ENCODE measurements at regions of chr1 and their contacts with region 1.

Region 1: GRCh38 chr1:23184212-23184934 is 15.7 kb upstream of the LUZP1 start:
- DNase-seq: peak; percentile 76
- ATAC-seq: no peak
- H3K4me3 ChIP-seq: peak overlapping the region in 3 of 5 experiments; percentile 13 to 59 (median 39)
- H3K4me3 Mint-ChIP-seq: peak overlapping the region; percentile 72
- H3K27ac ChIP-seq: no peak overlapping the region
- H3K27ac Mint-ChIP-seq: no peak overlapping the region
- H3K4me1 ChIP-seq: peaks cover 3 to 8% of the 10 kb centered on the region in 2 donors
- H3K4me1 Mint-ChIP-seq: peaks cover 9% of the 10 kb centered on the region
- H3K27me3 ChIP-seq: peaks cover 0 to 2% (median 0%) of the 10 kb centered on the region in 4 experiments
- H3K27me3 Mint-ChIP-seq: no peaks in the 10 kb centered on the region
- CTCF ChIP-seq: peak; percentile 83

Region 2: DNA sequence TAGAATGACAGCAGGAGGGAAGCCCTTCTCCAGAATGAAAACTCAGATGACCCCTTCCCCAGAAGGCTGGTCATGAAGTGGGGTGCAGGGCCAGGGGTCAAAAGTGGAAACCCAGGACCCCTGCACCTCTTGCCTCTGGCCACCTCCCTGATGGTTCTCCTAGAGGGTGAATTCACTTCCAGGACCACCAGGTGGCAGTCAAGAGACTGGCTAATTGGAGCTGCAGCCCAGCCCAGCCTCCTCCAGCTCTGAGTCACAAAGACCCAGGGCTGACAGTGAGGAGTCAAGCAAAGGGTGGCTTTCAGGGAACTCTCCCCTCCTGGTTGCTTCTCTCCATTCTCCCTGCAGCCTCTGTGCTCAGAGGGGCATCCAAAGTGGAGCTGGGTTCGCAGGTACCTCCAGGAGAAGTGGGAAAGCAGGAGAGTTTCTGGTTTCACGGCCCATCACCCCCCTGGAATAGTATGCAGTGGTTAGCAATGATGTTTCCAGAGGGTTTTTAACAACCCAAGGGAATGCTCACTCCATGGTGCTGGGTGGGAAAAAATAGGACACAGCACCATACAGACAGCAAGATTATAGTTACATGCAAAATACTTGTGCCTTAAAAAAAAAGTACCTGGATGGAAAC is 479.8 kb before region 1 on chr1:
- CTCF ChIA-PET with region 1: interaction called, 10 read pairs
- POLR2A ChIA-PET with region 1: no interaction called
- intact Hi-C with region 1: loop called (anchors 10 kb)
- DNase-seq: peak; percentile 70
- ATAC-seq: peak; percentile 85
- H3K4me3 ChIP-seq: no peak overlapping the region
- H3K4me3 Mint-ChIP-seq: no peak overlapping the region
- H3K27ac ChIP-seq: no peak overlapping the region
- H3K27ac Mint-ChIP-seq: no peak overlapping the region
- H3K4me1 ChIP-seq: no peaks in the 10 kb centered on the region
- H3K4me1 Mint-ChIP-seq: peaks cover 2% of the 10 kb centered on the region
- H3K27me3 ChIP-seq: peaks cover 0 to 21% (median 2%) of the 10 kb centered on the region in 4 experiments
- H3K27me3 Mint-ChIP-seq: peaks cover 43% of the 10 kb centered on the region
- CTCF ChIP-seq: peak; percentile 91

Region 3: GRCh38 chr1:23098463-23099170 is 85.8 kb before region 1 on chr1:
- CTCF ChIA-PET with region 1: interaction called, 884 read pairs
- POLR2A ChIA-PET with region 1: interaction called, 6 read pairs
- intact Hi-C with region 1: loop called (anchors 1 kb)
- DNase-seq: peak; percentile 79
- ATAC-seq: peak; percentile 87
- H3K4me3 ChIP-seq: no peak overlapping the region
- H3K4me3 Mint-ChIP-seq: peak overlapping the region; percentile 2
- H3K27ac ChIP-seq: no peak overlapping the region
- H3K27ac Mint-ChIP-seq: no peak overlapping the region
- H3K4me1 ChIP-seq: peaks cover 7 to 12% of the 10 kb centered on the region in 2 donors
- H3K4me1 Mint-ChIP-seq: peaks cover 15% of the 10 kb centered on the region
- H3K27me3 ChIP-seq: no peaks in the 10 kb centered on the region
- H3K27me3 Mint-ChIP-seq: no peaks in the 10 kb centered on the region
- CTCF ChIP-seq: peak; percentile 93

Region 4: GRCh38 chr1:23132033-23132432 is 52.3 kb before region 1 on chr1:
- CTCF ChIA-PET with region 1: interaction called, 14 read pairs
- POLR2A ChIA-PET with region 1: no interaction called
- intact Hi-C with region 1: no loop called
- DNase-seq: no peak
- ATAC-seq: no peak
- H3K4me3 ChIP-seq: no peak overlapping the region
- H3K4me3 Mint-ChIP-seq: no peak overlapping the region
- H3K27ac ChIP-seq: no peak overlapping the region
- H3K27ac Mint-ChIP-seq: no peak overlapping the region
- H3K4me1 ChIP-seq: no peaks in the 10 kb centered on the region
- H3K4me1 Mint-ChIP-seq: no peaks in the 10 kb centered on the region
- H3K27me3 ChIP-seq: no peaks in the 10 kb centered on the region
- H3K27me3 Mint-ChIP-seq: no peaks in the 10 kb centered on the region
- CTCF ChIP-seq: no peak

Region 5: DNA sequence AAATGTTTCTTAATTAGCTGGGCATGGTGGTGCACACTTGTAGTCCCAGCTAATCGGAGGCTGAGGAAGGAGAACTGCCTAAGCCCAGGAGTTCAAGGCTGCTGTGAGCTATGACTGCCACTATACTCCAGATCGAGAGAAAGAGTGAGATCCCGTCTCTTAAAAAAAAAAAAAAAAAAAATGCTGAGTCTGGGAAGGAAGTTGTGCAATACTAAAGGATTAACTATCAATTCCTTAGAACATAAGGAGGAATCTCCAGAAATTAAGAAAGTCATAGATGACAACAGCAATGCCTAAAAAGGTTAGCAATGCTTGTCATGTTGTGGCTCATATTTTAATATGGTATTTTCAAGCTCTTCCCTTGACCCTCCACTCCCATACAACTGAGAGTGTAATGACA is 21.0 kb before region 1 on chr1:
- CTCF ChIA-PET with region 1: interaction called, 23 read pairs
- POLR2A ChIA-PET with region 1: interaction called, 4 read pairs
- intact Hi-C with region 1: no loop called
- DNase-seq: no peak
- ATAC-seq: no peak
- H3K4me3 ChIP-seq: no peak overlapping the region
- H3K4me3 Mint-ChIP-seq: no peak overlapping the region
- H3K27ac ChIP-seq: no peak overlapping the region
- H3K27ac Mint-ChIP-seq: no peak overlapping the region
- H3K4me1 ChIP-seq: peaks cover 6 to 8% of the 10 kb centered on the region in 2 donors
- H3K4me1 Mint-ChIP-seq: peaks cover 9% of the 10 kb centered on the region
- H3K27me3 ChIP-seq: no peaks in the 10 kb centered on the region
- H3K27me3 Mint-ChIP-seq: no peaks in the 10 kb centered on the region
- CTCF ChIP-seq: no peak

Region 6: DNA sequence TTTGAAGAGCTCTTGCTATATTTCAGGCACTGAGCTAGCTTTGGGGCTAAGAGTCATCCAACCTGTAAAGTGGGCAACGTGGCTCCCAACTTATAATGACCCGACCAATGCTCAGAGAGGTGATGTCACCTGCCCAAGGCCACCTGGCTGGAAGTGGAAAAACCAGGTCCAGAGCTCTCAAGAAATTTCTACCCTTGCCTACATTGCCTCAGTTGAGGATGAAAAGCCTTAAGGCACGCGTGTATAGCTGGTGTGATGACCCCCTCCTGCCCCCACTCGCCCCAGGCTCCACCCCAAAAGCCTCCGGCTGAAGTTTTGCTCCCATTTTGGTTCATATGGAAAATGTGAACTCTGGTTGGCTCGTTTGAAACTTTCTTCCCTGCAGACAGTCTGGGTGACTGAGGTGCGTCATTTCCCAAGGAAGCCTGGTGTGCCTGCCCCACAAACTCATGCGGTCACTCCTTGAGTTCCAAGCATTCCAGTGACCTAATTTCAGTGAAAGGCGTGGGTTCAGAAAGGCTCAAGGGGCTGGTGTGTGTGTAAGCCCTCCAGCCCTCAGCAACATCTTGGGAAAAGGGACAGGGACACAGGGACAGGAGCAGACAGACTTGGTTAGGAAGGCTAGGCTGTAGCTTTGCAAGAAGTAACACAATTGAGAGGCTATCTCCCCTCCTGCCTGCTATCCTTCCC is 12.4 kb after region 1 on chr1:
- CTCF ChIA-PET with region 1: interaction called, 30 read pairs
- POLR2A ChIA-PET with region 1: no interaction called
- intact Hi-C with region 1: no loop called
- DNase-seq: no peak
- ATAC-seq: no peak
- H3K4me3 ChIP-seq: no peak overlapping the region
- H3K4me3 Mint-ChIP-seq: no peak overlapping the region
- H3K27ac ChIP-seq: no peak overlapping the region
- H3K27ac Mint-ChIP-seq: no peak overlapping the region
- H3K4me1 ChIP-seq: no peaks in the 10 kb centered on the region
- H3K4me1 Mint-ChIP-seq: no peaks in the 10 kb centered on the region
- H3K27me3 ChIP-seq: no peaks in the 10 kb centered on the region
- H3K27me3 Mint-ChIP-seq: peaks cover 32% of the 10 kb centered on the region
- CTCF ChIP-seq: no peak

Measured in B cell (primary cell).